Sigmoid colon (tissue), 7 donors: ENCODE measurements at regions of chr20 and their contacts with region 1.

Region 1: DNA sequence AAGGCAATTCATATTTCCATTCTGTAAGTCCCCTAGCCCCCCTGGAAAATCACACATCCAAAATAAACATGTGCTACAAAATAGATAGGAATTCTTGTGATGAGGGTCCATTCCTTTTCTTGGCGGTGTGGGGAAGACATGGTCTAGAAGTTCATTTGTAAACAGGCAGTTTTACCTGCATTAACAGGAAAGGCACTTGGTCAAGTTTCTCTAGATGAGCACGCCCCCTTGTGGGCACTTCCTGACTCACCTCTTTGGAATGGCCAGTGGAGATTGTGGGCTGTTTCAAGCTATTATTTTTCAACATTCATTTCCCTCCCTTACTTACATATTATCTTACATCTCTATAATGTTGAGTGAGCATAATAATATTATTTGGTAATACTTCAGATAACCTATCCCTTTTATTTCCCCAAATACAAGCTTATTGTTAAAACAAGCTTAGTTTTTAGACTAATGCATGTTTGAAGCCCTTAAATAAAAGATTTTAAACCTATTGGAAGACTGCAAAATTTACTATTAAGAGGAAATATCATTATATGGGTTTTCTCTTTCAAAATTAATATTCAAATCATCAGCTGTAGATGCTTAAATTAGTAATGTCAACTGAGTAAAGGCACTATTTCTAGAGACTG is 92.1 kb downstream of the TASP1 start:
- DNase-seq: peak; percentile 89
- H3K4me3 ChIP-seq: no peak overlapping the region
- H3K27ac ChIP-seq: no peak overlapping the region
- H3K4me1 ChIP-seq: peaks cover 0 to 16% (median 12%) of the 10 kb centered on the region in 4 donors
- H3K27me3 ChIP-seq: no peaks in the 10 kb centered on the region
- CTCF ChIP-seq: peak; percentile 46 to 87 (median 80)
- EP300 ChIP-seq: no peak
- POLR2A ChIP-seq: no peak

Region 2: GRCh38 chr20:13221673-13222318 is 324.8 kb before region 1 on chr20:
- intact Hi-C with region 1: loop called (anchors 2 kb)
- DNase-seq: peak; percentile 74
- H3K4me3 ChIP-seq: peak overlapping the region; percentile 12 to 62 (median 54)
- H3K27ac ChIP-seq: peak overlapping the region in 3 of 4 donors; percentile 1 to 52 (median 27)
- H3K4me1 ChIP-seq: peaks cover 0 to 22% (median 21%) of the 10 kb centered on the region in 4 donors
- H3K27me3 ChIP-seq: peaks cover 12 to 40% (median 29%) of the 10 kb centered on the region in 3 donors
- CTCF ChIP-seq: no peak
- EP300 ChIP-seq: no peak
- POLR2A ChIP-seq: no peak

Region 3: DNA sequence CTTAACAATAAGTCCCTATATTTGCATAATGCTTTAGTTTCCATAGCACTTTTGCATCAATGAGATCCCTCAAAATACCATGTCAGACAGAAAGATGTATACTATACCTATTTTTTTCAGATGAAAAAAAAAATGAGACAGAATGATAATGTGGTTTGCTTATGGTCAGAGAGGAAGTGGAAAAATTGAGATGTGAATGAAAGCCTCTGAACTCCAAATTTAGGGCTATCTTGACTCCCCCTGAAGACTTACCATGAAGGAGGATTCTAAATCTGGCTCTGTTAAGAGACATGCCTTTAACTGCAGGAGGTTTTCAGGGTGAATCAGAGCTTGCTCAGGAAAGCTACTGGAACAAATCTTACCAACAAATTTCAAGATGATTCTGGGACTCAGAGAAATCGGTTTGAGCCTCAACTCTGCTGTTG is 149.3 kb before region 1 on chr20:
- intact Hi-C with region 1: loop called (anchors 10 kb)
- DNase-seq: no peak
- H3K4me3 ChIP-seq: no peak overlapping the region
- H3K27ac ChIP-seq: peak overlapping the region in 3 of 4 donors; percentile 52 to 62 (median 55)
- H3K4me1 ChIP-seq: peaks cover 0 to 55% (median 25%) of the 10 kb centered on the region in 4 donors
- H3K27me3 ChIP-seq: no peaks in the 10 kb centered on the region
- CTCF ChIP-seq: no peak
- EP300 ChIP-seq: no peak
- POLR2A ChIP-seq: no peak

Region 4: GRCh38 chr20:13771853-13772453 is 225.3 kb after region 1 on chr20:
- intact Hi-C with region 1: loop called (anchors 10 kb)
- DNase-seq: no peak
- H3K4me3 ChIP-seq: no peak overlapping the region
- H3K27ac ChIP-seq: no peak overlapping the region
- H3K4me1 ChIP-seq: no peaks in the 10 kb centered on the region
- H3K27me3 ChIP-seq: no peaks in the 10 kb centered on the region
- CTCF ChIP-seq: peak in 3 of 4 experiments; percentile 22 to 39 (median 34)
- EP300 ChIP-seq: no peak
- POLR2A ChIP-seq: no peak

Region 5: DNA sequence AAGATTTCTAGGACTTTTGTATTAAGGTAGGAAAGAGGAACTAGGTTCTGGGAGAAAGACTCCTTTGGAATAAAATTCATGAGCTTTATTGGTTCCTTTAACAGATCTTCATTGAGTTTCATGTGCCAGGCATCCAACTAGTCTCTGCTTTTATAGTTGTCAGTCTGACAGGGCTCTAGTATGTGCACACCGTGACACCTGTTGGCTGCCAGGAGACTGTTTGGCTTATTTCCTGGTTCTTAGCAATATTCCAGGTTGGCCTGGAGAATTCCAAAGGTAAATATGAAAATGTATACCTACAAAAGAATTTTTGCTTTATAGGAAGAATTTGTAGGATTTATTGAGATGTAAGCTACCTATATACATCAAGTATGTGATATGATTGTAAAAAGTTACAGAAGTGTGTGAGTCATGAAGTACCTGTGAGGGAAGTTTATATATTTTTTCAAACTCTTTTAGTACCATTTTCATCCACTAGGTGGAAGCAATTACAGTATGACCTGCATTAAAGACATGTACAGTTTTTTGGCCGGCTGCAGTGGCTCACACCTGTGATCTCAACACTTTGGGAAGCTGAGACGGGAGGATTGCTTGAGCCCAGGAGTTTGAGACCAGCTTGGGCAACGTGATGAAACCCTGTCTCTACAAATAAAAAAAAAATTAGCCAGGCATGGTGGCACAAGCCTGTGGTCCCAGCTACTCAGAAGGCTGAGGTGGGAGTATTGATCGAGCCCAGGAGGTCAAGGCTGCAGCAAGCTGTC is 273.5 kb after region 1 on chr20:
- intact Hi-C with region 1: no loop called
- DNase-seq: peak; percentile 77
- H3K4me3 ChIP-seq: no peak overlapping the region
- H3K27ac ChIP-seq: no peak overlapping the region
- H3K4me1 ChIP-seq: peaks cover 0 to 4% (median 0%) of the 10 kb centered on the region in 4 donors
- H3K27me3 ChIP-seq: no peaks in the 10 kb centered on the region
- CTCF ChIP-seq: peak; percentile 70 to 73 (median 72)
- EP300 ChIP-seq: no peak
- POLR2A ChIP-seq: no peak